PC-9 (cell line): ENCODE measurements at regions of chrX and their contacts with region 1.

Region 1: DNA sequence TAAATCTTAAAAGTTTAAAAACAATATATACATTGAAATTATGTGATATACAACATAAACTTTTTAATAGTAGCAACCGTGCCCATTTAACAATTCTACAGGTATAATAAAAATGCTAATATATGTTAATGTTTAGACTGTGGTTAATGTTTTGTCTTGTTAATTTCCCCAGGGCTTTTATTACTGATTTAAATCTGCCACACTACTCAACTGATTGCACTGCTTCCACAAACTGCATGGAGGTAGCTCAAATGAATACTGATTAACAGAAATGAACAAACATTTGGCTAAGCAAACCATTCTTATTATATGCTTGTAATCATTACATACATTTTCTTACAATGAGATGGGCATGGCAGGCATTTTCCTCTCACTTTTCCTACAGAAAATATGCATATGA is 275.9 kb downstream of the GPC3 start:
- DNase-seq: no peak
- H3K4me3 ChIP-seq: no peak overlapping the region
- H3K27ac ChIP-seq: no peak overlapping the region
- H3K4me1 ChIP-seq: no peaks in the 10 kb centered on the region; the same call in 1 of the 2 replicates
- H3K27me3 ChIP-seq: no peaks in the 10 kb centered on the region
- CTCF ChIP-seq: no peak

Region 2: DNA sequence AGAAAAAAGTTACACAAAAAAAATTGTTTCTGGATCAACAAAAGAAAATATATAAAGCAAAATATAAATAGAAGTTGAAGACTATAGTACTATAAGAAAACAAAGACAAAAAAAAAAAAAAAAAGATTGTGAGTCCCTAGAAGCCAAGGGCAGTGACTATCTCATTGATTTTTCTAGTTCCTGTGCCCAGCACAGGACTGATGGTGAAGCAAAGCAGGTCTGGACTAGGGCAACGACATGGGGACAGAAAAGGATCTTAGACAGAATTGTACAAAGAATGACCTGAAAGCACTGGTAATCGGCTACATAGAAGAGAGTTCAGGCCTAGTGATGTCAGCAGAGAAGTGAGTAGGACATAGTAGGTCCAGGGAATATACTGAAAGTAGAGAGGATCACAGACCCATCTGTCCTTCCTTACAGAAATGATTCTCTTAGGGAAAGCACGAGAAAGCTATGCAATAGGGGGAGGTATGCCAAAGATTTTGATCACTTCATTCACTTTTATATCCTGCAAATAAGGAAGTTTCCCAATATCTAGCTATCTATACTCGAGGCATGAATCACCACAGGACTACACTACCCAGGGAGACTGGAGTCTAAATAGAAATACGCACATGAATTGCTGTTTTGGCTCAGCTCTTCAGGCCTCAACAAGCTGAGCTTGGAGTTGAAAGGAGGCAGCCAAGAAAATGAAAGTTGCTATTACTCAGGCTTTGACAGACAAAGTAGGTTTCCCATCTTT is 63.3 kb before region 1 on chrX:
- CTCF ChIA-PET with region 1: no interaction called
- POLR2A ChIA-PET with region 1: no interaction called
- intact Hi-C with region 1: no loop called
- DNase-seq: peak in 1 of 2 experiments; percentile 71
- H3K4me3 ChIP-seq: no peak overlapping the region
- H3K27ac ChIP-seq: no peak overlapping the region
- H3K4me1 ChIP-seq: 0 out of 2 replicates have a peak, but pooled peaks cover 7% of the 10 kb centered on the region
- H3K27me3 ChIP-seq: no peaks in the 10 kb centered on the region
- CTCF ChIP-seq: no peak

Region 3: GRCh38 chrX:133745349-133745748 is 35.9 kb after region 1 on chrX:
- CTCF ChIA-PET with region 1: no interaction called
- POLR2A ChIA-PET with region 1: no interaction called
- intact Hi-C with region 1: loop called (anchors 5 kb)
- DNase-seq: no peak
- H3K4me3 ChIP-seq: no peak overlapping the region
- H3K27ac ChIP-seq: no peak overlapping the region
- H3K4me1 ChIP-seq: no peaks in the 10 kb centered on the region
- H3K27me3 ChIP-seq: no peaks in the 10 kb centered on the region
- CTCF ChIP-seq: peak; percentile 38; the same call in 1 of the 2 replicates

Region 4: DNA sequence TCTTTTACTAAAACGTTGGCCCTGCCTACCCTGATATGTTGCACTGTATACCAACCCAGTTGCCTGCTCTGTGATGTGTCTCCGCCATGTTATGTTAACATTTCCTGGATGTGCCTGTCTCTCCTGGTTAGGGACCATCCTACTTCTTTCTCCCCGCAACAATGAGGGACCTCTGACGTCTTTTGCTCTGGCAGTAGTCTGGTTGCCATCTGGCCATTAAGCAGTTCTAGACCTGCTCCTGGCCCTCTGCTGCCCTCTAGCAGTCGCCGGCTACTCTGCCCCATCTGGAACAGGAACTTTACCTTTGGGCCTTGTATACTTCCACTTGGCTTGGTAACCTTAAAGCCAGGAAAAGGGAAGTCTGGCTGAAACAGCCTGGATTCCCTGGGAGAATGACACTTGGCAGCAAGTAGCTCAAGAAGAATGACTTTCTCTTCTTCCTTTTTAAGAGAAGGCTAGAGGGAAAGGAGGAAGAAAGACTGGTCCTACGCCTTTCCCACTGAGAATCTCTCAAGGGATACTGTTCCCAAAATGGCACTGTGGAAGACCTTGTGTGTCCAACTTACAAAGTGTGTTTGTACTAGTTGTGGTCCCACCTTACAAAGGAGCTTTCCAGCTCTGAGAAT is 212.4 kb after region 1 on chrX:
- CTCF ChIA-PET with region 1: no interaction called
- POLR2A ChIA-PET with region 1: no interaction called
- intact Hi-C with region 1: loop called (anchors 10 kb)
- DNase-seq: peak in 1 of 2 experiments; percentile 29
- H3K4me3 ChIP-seq: no peak overlapping the region
- H3K27ac ChIP-seq: no peak overlapping the region
- H3K4me1 ChIP-seq: no peaks in the 10 kb centered on the region
- H3K27me3 ChIP-seq: no peaks in the 10 kb centered on the region
- CTCF ChIP-seq: peak; percentile 72

Region 5: DNA sequence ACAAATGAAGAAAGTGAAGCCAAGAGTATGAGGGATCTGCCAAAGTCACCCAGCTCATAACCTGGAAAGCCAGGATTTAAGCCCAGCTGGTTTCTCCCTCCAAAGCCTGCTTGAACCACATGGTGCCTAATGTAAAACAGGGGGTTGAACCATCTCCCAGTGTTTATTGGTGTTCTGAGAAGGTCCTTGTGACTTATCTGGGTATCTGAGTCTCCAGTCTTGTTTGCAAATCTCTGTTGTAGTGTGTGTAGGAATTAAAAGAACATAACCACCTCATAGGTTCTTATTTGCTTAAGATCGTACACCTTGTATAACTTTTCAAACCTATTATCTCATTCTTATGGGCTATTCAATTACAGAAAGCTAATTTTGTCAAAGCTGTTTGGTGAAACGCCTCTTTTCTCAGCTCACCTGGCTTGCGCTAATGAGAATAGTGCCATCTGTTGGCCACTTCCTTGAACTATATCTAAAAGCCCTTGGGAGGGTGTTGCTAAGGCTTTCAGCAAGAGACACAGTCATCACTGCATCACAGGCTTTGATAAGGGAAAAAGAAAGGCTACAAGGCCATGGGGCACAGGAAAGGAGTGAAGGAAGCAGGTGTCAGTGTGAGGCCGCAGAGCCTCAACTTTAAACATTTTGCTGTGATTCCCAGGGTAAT is 1376.8 kb after region 1 on chrX:
- CTCF ChIA-PET with region 1: no interaction called
- POLR2A ChIA-PET with region 1: no interaction called
- intact Hi-C with region 1: no loop called
- DNase-seq: peak; percentile 39 to 60
- H3K4me3 ChIP-seq: no peak overlapping the region
- H3K27ac ChIP-seq: no peak overlapping the region
- H3K4me1 ChIP-seq: no peaks in the 10 kb centered on the region
- H3K27me3 ChIP-seq: no peaks in the 10 kb centered on the region
- CTCF ChIP-seq: peak; percentile 78